ENCODE measurements at regions of chr14 and their contacts with region 1.

Region 1: GRCh38 chr14:22556990-22557623 is 31.9 kb downstream of the DAD1 start:
- DNase-seq: peak; percentile 78
- H3K4me3 Mint-ChIP-seq: peak overlapping the region; percentile 62
- H3K27ac Mint-ChIP-seq: peak overlapping the region; percentile 46
- H3K4me1 Mint-ChIP-seq: peaks cover 22% of the 10 kb centered on the region
- H3K27me3 Mint-ChIP-seq: no peaks in the 10 kb centered on the region
- CTCF ChIP-seq: peak; percentile 98

Region 2: DNA sequence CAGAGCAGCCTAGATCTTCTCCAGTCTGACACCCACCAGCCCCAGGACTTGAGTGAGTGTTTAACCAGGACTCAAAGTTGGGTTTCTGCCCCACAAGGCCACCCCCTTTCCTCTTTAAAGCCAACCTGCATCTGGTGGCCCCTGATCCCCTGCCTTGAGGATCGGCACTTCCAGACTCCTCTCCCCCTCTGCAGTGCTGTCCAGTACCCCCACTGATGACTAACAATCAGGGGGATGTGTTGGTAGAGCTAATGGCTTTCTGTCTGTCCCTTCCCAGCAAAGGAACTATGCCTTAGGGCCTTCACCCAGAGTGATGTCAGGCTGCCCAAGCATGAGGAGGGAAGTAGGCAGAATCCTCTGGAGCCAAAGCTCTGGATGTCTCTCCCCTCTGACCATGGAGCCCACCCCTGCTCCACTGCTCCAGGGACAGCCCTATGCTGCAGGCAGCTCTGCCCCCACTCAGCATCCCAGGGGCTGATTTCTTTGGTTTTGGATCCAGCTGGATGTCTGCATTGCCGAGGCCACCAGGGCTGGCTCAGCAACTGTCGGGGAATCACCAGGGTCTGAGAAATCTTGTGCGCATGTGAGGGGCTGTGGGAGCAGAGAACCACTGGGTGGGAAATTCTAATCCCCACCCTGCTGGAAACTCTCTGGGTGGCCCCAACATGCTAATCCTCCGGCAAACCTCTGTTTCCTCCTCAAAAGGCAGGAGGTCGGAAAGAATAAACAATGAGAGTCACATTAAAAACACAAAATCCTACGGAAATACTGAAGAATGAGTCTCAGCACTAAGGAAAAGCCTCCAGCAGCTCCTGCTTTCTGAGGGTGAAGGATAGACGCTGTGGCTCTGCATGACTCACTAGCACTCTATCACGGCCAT is 11.0 kb before region 1 on chr14:
- CTCF ChIA-PET with region 1: interaction called, 48 read pairs
- POLR2A ChIA-PET with region 1: interaction called, 3 read pairs
- intact Hi-C with region 1: no loop called
- DNase-seq: peak; percentile 24
- H3K4me3 Mint-ChIP-seq: no peak overlapping the region
- H3K27ac Mint-ChIP-seq: no peak overlapping the region
- H3K4me1 Mint-ChIP-seq: peaks cover 2% of the 10 kb centered on the region
- H3K27me3 Mint-ChIP-seq: no peaks in the 10 kb centered on the region
- CTCF ChIP-seq: no peak

Region 3: GRCh38 chr14:22614224-22614799 is 57.2 kb after region 1 on chr14:
- CTCF ChIA-PET with region 1: no interaction called
- POLR2A ChIA-PET with region 1: no interaction called
- intact Hi-C with region 1: no loop called
- DNase-seq: peak; percentile 91
- H3K4me3 Mint-ChIP-seq: no peak overlapping the region
- H3K27ac Mint-ChIP-seq: peak overlapping the region; percentile 63
- H3K4me1 Mint-ChIP-seq: peaks cover 20% of the 10 kb centered on the region
- H3K27me3 Mint-ChIP-seq: no peaks in the 10 kb centered on the region
- CTCF ChIP-seq: no peak

Region 4: GRCh38 chr14:22653012-22653621 is 96.0 kb after region 1 on chr14:
- CTCF ChIA-PET with region 1: interaction called, 36 read pairs
- POLR2A ChIA-PET with region 1: interaction called, 5 read pairs
- intact Hi-C with region 1: loop called (anchors 1 kb)
- DNase-seq: peak; percentile 87
- H3K4me3 Mint-ChIP-seq: no peak overlapping the region
- H3K27ac Mint-ChIP-seq: no peak overlapping the region
- H3K4me1 Mint-ChIP-seq: peaks cover 10% of the 10 kb centered on the region
- H3K27me3 Mint-ChIP-seq: no peaks in the 10 kb centered on the region
- CTCF ChIP-seq: peak; percentile 84

Region 5: GRCh38 chr14:22822571-22823098 is 265.5 kb after region 1 on chr14:
- CTCF ChIA-PET with region 1: interaction called, 7 read pairs
- POLR2A ChIA-PET with region 1: no interaction called
- intact Hi-C with region 1: loop called (anchors 2 kb)
- DNase-seq: peak; percentile 85
- H3K4me3 Mint-ChIP-seq: peak overlapping the region; percentile 29
- H3K27ac Mint-ChIP-seq: no peak overlapping the region
- H3K4me1 Mint-ChIP-seq: peaks cover 18% of the 10 kb centered on the region
- H3K27me3 Mint-ChIP-seq: no peaks in the 10 kb centered on the region
- CTCF ChIP-seq: peak; percentile 86

Region 6: DNA sequence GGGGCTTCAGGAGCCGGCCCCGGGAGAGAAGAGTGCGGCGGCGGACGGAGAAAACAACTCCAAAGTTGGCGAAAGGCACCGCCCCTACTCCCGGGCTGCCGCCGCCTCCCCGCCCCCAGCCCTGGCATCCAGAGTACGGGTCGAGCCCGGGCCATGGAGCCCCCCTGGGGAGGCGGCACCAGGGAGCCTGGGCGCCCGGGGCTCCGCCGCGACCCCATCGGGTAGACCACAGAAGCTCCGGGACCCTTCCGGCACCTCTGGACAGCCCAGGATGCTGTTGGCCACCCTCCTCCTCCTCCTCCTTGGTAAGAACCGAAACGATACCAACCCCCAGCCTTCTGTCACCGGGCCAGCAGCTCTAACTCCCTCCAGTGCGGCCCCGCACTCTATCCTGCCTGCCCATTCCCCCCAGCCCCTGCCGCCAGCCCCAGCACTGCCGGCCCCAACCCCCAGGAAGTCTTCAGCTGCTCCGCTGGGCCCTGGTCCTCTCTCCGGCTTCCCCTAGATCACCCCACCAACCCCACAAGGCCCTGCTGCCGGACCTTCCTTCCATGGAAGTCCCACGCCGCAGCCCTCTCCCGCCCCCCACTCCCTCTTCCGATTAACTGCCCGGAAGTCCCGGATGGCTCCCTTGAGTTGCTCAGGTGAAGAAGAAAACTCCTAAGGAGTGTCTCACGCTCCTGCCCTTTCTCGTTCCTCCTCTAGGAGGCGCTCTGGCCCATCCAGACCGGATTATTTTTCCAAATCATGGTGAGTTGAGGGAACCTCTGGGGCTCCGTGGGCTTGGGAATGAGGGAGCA is 315.1 kb after region 1 on chr14:
- CTCF ChIA-PET with region 1: interaction called, 11 read pairs
- POLR2A ChIA-PET with region 1: interaction called, 5 read pairs
- intact Hi-C with region 1: no loop called
- DNase-seq: peak; percentile 90
- H3K4me3 Mint-ChIP-seq: peak overlapping the region; percentile 79
- H3K27ac Mint-ChIP-seq: peak overlapping the region; percentile 91
- H3K4me1 Mint-ChIP-seq: peaks cover 20% of the 10 kb centered on the region
- H3K27me3 Mint-ChIP-seq: no peaks in the 10 kb centered on the region
- CTCF ChIP-seq: peak; percentile 81